Activated CD8-positive, alpha-beta memory T cell treated with anti-CD3 and anti-CD28 coated beads, Interleukin-2, amount 10 ng/mL, durations not matched to agents 7 days and 5 days (primary cell): ENCODE measurements at regions of chr1 and their contacts with region 1.

Region 1: GRCh38 chr1:28668191-28668955 is at the start of gene GMEB1:
- DNase-seq: peak; percentile 92
- ATAC-seq: peak; percentile 75
- H3K4me3 Mint-ChIP-seq: peak within 1 kb of the TSS; percentile 95
- H3K27ac Mint-ChIP-seq: peak within 1 kb of the TSS; percentile 99
- H3K4me1 Mint-ChIP-seq: peaks cover 14% of the 10 kb centered on the region
- H3K27me3 Mint-ChIP-seq: no peaks in the 10 kb centered on the region
- total RNA-seq, gene GMEB1: 33.0 to 38.2 TPM

Region 2: DNA sequence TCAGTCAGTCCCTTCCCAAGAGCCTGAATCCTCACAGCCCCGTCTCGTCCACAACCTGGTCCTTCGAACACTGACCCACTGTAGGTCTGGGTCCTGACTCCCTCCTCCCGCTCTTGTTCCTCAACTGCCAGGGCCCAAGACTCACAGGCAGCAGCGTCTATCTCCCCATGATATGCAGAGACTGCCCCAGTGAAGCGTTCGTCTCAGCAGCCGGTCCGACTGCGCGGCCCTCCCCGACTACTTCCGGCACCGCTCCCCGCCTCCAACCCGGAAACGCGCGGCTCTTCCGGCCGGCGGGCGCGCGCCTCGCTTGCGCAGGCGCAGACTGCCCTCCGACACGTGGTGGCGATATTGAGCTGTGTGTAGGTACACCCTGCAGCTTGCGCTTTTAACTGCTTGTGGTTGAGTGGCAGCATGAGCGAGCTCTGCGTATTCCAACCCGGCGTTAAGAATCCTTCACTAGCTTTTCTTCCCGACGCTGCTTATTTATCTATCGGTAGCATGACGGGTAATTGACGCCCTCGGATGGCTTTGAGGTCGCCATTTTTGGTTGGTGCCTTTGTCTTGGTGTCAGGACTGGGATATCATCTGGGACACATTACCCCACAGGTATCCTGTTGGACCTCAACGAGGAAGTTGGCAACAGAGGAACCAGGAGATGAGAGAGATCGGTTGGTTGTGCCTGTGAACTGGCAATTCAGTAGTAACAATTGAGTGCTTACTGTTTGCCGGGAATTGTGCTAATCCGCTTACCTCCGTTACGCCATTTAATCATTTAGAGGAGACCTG is 25.3 kb before region 1 on chr1 and contains the start of gene TAF12:
- CTCF ChIA-PET with region 1: interaction called, 18 read pairs
- DNase-seq: peak; percentile 95
- ATAC-seq: peak; percentile 89
- H3K4me3 Mint-ChIP-seq: peak within 1 kb of the TSS; percentile 97
- H3K27ac Mint-ChIP-seq: peak within 1 kb of the TSS; percentile 94
- H3K4me1 Mint-ChIP-seq: peaks cover 49% of the 10 kb centered on the region
- H3K27me3 Mint-ChIP-seq: no peaks in the 10 kb centered on the region
- total RNA-seq, gene TAF12: 30.4 to 33.0 TPM